ENCODE measurements at regions of chr20 and their contacts with region 1.

Region 1: GRCh38 chr20:22207280-22207679 is 377.1 kb downstream of the FOXA2 start:
- DNase-seq: no peak
- H3K4me3 ChIP-seq: no peak overlapping the region
- CTCF ChIP-seq: no peak

Region 2: DNA sequence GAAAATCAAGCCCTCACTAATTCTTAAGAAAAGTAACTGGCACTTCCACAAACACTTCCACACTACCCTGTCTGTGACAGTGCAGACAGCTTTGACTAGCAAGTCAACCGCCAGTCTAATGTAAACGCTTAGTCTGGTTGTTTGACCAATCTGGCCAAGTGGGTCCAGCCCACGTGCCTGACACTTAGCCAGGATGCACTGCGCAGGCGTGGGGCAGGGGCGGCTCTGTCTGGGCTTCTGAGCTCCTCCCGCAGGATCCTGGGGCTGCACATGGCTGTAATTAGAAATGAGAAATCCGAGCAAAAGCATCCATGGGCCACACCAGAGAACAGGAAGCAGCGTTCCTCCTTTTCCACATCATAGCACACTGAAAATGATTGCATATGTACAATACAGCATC is 47.0 kb before region 1 on chr20:
- in situ Hi-C with region 1: loop called (anchors 5 kb)
- DNase-seq: no peak
- H3K4me3 ChIP-seq: no peak overlapping the region
- CTCF ChIP-seq: no peak

Region 3: DNA sequence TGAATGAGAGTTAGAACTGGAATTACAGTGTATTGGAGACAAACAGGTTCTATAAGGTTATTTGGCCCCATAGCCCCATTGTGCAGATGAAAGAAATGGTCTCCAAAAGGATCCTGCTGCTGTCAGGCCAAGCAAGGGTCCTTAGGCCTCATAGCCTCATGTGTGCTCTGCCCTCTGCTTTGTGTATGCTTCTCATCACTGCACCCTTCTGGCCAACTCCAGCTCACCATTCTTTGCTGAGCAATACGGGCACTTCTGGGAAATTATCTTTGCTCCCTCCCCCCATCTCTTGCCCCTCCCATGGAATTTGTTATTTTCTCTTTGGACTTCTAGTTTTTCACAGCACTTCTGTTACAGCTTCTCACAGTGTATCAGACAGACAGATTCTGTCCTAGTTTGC is 78.3 kb after region 1 on chr20:
- in situ Hi-C with region 1: no loop called
- DNase-seq: no peak
- H3K4me3 ChIP-seq: no peak overlapping the region
- CTCF ChIP-seq: no peak

Measured in astrocyte of the cerebellum (primary cell).